Vagina (tissue), 2 donors: ENCODE measurements at regions of chr9 and their contacts with region 1.

Region 1: GRCh38 chr9:125515983-125516940 is 190.7 kb downstream of the MAPKAP1 start:
- DNase-seq: no peak
- H3K4me3 ChIP-seq: no peak overlapping the region
- H3K27ac ChIP-seq: no peak overlapping the region
- H3K4me1 ChIP-seq: peaks cover 67% of the 10 kb centered on the region
- H3K27me3 ChIP-seq: no peaks in the 10 kb centered on the region
- CTCF ChIP-seq: no peak
- POLR2A ChIP-seq: no peak

Region 2: GRCh38 chr9:125558453-125559092 is 42.3 kb after region 1 on chr9:
- intact Hi-C with region 1: loop called (anchors 5 kb)
- DNase-seq: no peak
- H3K4me3 ChIP-seq: no peak overlapping the region
- H3K27ac ChIP-seq: no peak overlapping the region
- H3K4me1 ChIP-seq: peaks cover 27% of the 10 kb centered on the region
- H3K27me3 ChIP-seq: no peaks in the 10 kb centered on the region
- CTCF ChIP-seq: peak; percentile 42 to 73 (median 64)
- POLR2A ChIP-seq: no peak